PC-3 (cell line): ENCODE measurements at regions of chr21 and their contacts with region 1.

Region 1: DNA sequence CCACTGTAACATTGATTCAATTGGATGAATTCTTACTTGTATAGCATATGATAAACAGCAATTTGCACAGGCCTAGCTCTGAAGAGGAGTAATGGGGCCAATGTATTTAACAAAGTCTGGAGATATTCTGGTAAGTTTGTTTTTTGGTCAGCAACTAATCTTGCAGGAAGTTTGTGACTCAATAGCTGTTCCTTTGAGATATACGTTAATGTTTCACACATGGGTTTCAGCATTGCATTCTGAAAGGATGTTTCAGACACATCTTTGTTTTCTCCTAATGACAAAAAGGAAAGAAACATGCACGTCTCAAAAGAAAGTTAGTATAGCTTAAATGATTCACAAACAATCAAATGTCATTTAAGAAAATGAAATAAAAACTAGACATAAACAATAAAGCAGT is 49.0 kb downstream of the LTN1 start:
- DNase-seq: no peak
- ATAC-seq: no peak
- H3K4me3 ChIP-seq: no peak overlapping the region
- H3K27ac ChIP-seq: no peak overlapping the region
- H3K4me1 ChIP-seq: no peaks in the 10 kb centered on the region
- H3K27me3 ChIP-seq: no peaks in the 10 kb centered on the region
- CTCF ChIP-seq: no peak

Region 2: DNA sequence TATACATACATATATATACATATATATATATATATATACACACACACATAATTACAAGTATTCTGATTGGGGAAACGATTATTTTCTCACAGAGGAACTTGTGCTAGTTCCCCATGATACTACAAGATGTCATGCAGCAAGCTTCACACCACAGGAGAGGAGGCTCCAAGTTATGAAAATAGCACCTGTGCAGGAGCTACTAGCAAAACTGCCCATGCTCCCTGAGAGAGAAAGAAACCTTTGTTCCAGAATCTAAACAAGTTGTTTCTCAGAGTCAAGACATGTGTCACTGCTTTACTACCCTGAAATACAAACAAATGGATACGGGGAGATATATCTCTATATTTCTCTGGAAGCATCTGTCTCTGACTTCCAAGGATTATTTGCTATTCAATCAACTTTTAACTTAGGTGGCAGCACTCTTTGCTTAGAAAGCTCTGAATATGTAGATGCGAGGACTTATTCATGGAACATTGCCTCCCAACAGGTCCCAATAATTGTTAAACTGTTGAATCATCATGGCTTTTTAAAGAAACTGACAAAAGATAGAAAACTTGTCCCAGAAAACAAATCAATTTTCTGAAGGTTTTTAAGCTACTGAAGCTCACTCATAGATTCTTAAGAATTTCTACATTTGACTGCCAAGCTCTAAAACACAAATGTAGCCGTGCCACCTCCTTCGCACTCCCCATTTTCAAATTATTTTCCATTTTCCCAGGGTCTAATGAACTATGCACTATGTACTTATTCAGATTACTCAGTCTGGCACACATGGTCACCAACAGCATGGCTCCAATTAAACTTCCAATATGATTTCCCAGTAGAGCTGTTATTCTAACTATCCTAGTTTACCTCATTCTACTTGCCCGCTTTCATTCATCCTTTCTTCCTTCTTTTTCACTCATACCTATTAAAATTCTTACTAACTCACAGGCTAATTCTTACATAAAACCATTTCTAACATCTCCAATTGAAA is 880.1 kb before region 1 on chr21:
- CTCF ChIA-PET with region 1: no interaction called
- POLR2A ChIA-PET with region 1: no interaction called
- intact Hi-C with region 1: loop called (anchors 10 kb)
- DNase-seq: no peak
- ATAC-seq: peak; percentile 38; the same call in 1 of the 2 replicates
- H3K4me3 ChIP-seq: no peak overlapping the region
- H3K27ac ChIP-seq: no peak overlapping the region
- H3K4me1 ChIP-seq: no peaks in the 10 kb centered on the region
- H3K27me3 ChIP-seq: no peaks in the 10 kb centered on the region
- CTCF ChIP-seq: no peak

Region 3: DNA sequence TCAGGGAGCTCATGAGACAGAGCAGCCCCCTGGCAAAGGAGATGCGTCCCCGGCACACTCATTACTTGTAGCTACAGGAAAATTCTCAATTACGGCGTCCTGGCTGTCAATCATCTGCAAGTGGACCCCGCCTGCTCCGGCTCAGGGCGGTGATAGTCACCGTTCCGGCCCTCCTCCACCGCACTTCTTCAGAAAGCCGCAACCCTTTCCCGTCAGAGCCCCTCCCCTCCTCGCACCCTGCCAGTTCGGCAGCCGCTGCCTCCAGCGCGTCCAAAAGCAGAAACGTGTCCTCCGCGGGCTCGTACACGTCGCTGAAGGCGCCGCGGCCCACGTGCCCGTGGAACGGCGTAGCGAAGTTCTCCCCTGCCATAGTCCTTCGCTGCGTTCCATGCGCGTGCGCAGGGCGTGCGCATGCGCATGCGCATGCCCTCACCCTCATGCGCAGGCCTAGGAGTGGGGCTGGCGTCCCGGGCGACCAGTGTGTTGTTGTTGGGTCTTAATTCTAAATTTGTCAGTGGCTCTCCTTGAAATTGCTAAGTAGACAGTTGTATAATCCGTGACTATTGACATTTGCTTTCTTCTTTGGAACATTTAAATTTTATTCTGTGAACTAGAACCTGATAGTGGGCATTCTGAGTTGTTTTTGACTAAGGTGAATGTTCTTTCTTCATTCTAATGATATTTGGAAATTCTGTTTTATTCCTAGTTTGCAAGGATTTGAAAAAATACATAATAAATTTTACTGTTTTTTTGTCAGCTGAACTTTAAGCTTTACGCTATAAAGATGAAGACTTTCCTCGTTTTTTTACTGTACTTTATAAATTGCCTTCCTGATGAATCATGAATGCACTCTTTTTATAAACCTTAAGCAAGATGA is 58.4 kb before region 1 on chr21:
- CTCF ChIA-PET with region 1: no interaction called
- POLR2A ChIA-PET with region 1: no interaction called
- intact Hi-C with region 1: loop called (anchors 10 kb)
- DNase-seq: peak; percentile 96
- ATAC-seq: peak; percentile 96
- H3K4me3 ChIP-seq: peak overlapping the region; percentile 72
- H3K27ac ChIP-seq: peak overlapping the region; percentile 87
- H3K4me1 ChIP-seq: peaks cover 16% of the 10 kb centered on the region; the same call in 1 of the 2 replicates
- H3K27me3 ChIP-seq: no peaks in the 10 kb centered on the region
- CTCF ChIP-seq: no peak